A549 (cell line): ENCODE measurements at regions of chr7 and their contacts with region 1.

Region 1: GRCh38 chr7:137898839-137899721 is 52.3 kb upstream of the DGKI start:
- DNase-seq: peak; percentile 66 to 71
- ATAC-seq: peak; percentile 95 to 98
- H3K4me3 ChIP-seq: no peak overlapping the region
- H3K27ac ChIP-seq: peak overlapping the region; percentile 34 to 52; a peak in 2 of 6 replicates
- H3K4me1 ChIP-seq: peaks cover 12% of the 10 kb centered on the region; the same call in 1 of the 3 replicates
- CTCF ChIP-seq: peak; percentile 88
- EP300 ChIP-seq: no peak
- POLR2A ChIP-seq: no peak
- RAD21 ChIP-seq: peak; percentile 91 to 93

Region 2: DNA sequence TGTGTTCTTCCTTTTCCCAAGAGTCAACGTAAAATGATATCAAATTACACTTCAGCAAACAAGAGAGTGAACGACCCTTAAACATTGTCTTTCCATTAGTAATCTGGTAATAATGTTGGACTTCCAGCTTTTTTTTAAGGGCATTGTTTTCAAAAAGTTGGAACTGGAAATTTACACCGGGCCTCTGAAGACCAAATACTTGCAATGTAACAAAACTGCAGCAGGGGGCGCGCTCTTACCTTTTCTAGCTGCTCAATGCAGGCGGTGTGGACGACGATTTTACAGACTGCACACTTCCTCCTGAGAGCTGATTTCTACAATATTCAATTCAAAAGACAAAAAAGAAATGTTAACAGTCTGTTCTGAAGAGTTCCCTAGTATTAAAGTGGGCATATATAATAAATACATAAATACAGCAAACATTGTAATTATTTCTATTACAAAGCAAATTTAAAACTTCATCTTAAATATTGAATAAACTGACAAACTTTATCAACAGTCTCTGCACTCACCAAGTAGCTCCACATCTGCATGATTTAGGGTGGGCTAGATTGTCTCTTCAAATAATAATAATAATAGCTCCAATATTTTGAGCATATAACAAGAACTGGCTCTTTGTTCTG is 242.7 kb before region 1 on chr7:
- CTCF ChIA-PET with region 1: interaction called, 111 read pairs
- POLR2A ChIA-PET with region 1: no interaction called
- DNase-seq: peak; percentile 59 to 69
- ATAC-seq: peak; percentile 83 to 92; a peak in 4 of 6 replicates
- H3K4me3 ChIP-seq: no peak overlapping the region
- H3K27ac ChIP-seq: no peak overlapping the region
- H3K4me1 ChIP-seq: no peaks in the 10 kb centered on the region
- CTCF ChIP-seq: peak; percentile 87
- EP300 ChIP-seq: no peak
- POLR2A ChIP-seq: no peak
- RAD21 ChIP-seq: peak; percentile 85

Region 3: DNA sequence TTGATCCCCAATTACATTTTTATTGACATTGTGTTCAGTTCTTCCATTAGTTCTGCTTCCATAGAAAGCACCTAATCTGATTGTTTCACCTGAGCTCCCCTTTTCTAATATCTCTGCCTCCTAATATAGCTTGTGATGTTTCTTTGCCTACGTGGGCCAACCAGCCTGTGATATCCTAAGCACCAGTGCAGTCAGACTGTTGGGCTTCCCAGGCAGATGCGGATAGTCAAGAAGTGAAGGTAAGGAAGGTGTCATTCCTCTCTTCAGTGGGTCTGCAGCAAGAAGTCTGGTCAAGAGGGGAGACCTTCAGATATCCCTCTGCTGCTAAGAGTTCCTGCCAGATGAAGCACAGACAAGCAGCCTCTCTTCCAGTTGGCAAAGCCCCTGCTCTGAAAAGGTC is 36.1 kb before region 1 on chr7:
- CTCF ChIA-PET with region 1: no interaction called
- POLR2A ChIA-PET with region 1: no interaction called
- DNase-seq: no peak
- ATAC-seq: no peak
- H3K4me3 ChIP-seq: no peak overlapping the region
- H3K27ac ChIP-seq: no peak overlapping the region
- H3K4me1 ChIP-seq: no peaks in the 10 kb centered on the region
- CTCF ChIP-seq: no peak
- EP300 ChIP-seq: no peak
- POLR2A ChIP-seq: no peak
- RAD21 ChIP-seq: no peak

Region 4: DNA sequence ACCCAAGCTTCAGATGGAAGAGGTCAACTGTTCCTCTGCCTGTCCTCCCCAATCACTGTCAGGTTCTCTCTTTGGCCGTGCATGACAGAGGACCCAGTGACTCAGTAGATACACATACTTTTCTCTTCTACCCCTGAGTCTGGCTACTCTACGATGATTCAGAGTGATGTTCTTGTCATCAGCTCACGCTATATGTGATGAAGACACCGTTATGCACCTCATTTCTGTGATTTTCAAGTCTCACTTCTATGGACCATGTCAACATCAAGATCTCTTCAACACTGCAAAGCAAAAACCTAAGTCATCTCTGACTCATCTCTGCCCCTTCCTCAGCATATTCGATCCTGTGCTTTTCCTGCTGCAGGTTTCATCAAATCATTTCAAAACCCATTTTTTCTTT is 24.3 kb after region 1 on chr7:
- CTCF ChIA-PET with region 1: interaction called, 18 read pairs
- POLR2A ChIA-PET with region 1: no interaction called
- DNase-seq: peak; percentile 15 to 55
- ATAC-seq: peak; percentile 93 to 95
- H3K4me3 ChIP-seq: no peak overlapping the region
- H3K27ac ChIP-seq: peak overlapping the region in 1 of 2 experiments; percentile 70; a peak in 4 of 6 replicates
- H3K4me1 ChIP-seq: peaks cover 22% of the 10 kb centered on the region
- CTCF ChIP-seq: no peak
- EP300 ChIP-seq: no peak
- POLR2A ChIP-seq: no peak
- RAD21 ChIP-seq: no peak

Region 5: GRCh38 chr7:137967143-137968018 is 68.3 kb after region 1 on chr7:
- CTCF ChIA-PET with region 1: interaction called, 14 read pairs
- POLR2A ChIA-PET with region 1: no interaction called
- DNase-seq: peak in 1 of 2 experiments; percentile 27
- ATAC-seq: peak in 1 of 2 experiments; percentile 50; a peak in 3 of 6 replicates
- H3K4me3 ChIP-seq: no peak overlapping the region
- H3K27ac ChIP-seq: peak overlapping the region in 1 of 2 experiments; percentile 50; a peak in 3 of 6 replicates
- H3K4me1 ChIP-seq: peaks cover 44% of the 10 kb centered on the region
- CTCF ChIP-seq: no peak
- EP300 ChIP-seq: no peak
- POLR2A ChIP-seq: no peak
- RAD21 ChIP-seq: no peak

Region 6: DNA sequence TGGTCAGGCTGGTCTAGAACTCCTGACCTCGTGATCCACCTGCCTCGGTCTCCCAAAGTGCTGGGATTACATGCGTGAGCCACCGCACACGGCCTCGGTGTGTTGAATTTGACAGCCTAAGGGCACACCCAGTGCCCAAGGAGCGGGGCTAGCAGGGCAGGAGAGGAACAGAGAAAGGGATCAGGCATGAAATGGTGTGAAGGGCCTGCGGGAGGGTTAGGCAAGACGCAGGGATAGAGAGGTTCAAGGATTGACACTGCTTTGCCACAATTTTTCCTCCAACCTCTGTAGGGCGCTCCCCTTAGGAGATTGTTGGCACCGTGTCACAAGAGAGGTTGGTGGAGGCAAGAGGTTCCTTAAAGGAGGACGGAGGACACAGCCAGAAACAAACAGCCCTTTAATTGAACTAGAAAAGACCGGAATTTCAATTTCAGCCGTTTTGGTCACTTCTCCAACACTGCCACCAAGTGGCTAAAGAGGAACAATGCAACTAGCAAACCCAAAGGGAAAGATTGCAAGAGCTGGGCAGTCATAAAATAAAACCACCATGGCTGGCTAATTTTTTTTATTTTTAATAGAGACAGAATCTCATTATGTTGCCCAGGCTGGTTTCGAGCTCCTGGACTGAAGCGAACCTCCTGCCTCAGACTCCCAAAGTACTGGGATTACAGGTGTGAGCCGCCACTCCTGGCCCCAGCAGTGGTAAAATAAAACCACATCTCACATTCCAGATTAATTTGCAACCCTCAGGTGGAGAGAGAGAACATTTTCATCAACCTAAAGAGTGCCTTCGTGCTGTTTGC is 109.7 kb after region 1 on chr7:
- CTCF ChIA-PET with region 1: interaction called, 461 read pairs
- POLR2A ChIA-PET with region 1: no interaction called
- DNase-seq: peak; percentile 36 to 58
- ATAC-seq: peak; percentile 80 to 81
- H3K4me3 ChIP-seq: no peak overlapping the region
- H3K27ac ChIP-seq: peak overlapping the region; percentile 60 to 71; a peak in 5 of 6 replicates
- H3K4me1 ChIP-seq: no peaks in the 10 kb centered on the region
- CTCF ChIP-seq: peak; percentile 92
- EP300 ChIP-seq: no peak
- POLR2A ChIP-seq: no peak
- RAD21 ChIP-seq: peak; percentile 93 to 96

Region 7: DNA sequence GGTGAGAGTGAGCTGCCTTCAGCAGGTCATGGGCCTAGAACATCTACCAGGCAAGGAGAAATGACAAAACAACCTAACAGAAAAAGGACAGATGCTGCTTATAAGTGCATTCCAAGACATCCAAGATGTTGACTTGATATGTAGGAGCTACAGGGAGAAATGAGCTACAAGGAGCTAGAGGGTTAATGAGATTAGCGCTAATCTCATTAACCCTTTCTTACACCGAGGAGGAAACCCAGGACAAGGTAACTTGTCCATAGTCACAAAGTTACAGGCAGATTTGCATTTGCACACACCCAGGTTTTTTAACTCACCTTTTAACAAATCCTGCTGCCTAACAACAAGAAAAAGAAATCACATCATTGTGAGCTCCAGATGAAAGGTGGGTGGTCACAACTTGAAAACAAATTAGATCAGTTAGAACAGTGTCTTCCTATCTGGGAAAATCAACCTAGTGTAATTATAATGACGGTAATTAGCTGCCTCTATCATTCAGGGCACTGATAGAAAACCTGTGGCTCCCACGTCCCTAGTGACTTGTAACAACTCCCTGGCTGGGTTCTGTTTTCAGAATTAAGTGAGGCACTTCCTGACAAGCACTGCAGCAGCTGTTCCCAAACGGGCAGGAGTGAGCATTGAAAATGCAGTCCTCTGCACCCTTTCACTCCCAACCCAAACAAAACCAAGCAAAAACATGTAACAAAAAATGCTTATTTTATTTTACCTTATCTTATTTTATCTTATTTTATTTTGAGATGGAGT is 1076.4 kb after region 1 on chr7:
- CTCF ChIA-PET with region 1: no interaction called
- POLR2A ChIA-PET with region 1: no interaction called
- DNase-seq: no peak
- ATAC-seq: no peak
- H3K4me3 ChIP-seq: no peak overlapping the region
- H3K27ac ChIP-seq: no peak overlapping the region
- H3K4me1 ChIP-seq: peaks cover 20% of the 10 kb centered on the region
- CTCF ChIP-seq: no peak
- EP300 ChIP-seq: no peak
- POLR2A ChIP-seq: no peak
- RAD21 ChIP-seq: no peak